ENCODE measurements at regions of chr10 and their contacts with region 1.

Region 1: GRCh38 chr10:71419750-71420149 is 23.0 kb downstream of the CDH23 start:
- DNase-seq: no peak
- H3K4me3 ChIP-seq: no peak overlapping the region
- H3K27ac ChIP-seq: no peak overlapping the region
- H3K4me1 ChIP-seq: no peaks in the 10 kb centered on the region
- H3K27me3 ChIP-seq: no peaks in the 10 kb centered on the region
- CTCF ChIP-seq: no peak

Region 2: DNA sequence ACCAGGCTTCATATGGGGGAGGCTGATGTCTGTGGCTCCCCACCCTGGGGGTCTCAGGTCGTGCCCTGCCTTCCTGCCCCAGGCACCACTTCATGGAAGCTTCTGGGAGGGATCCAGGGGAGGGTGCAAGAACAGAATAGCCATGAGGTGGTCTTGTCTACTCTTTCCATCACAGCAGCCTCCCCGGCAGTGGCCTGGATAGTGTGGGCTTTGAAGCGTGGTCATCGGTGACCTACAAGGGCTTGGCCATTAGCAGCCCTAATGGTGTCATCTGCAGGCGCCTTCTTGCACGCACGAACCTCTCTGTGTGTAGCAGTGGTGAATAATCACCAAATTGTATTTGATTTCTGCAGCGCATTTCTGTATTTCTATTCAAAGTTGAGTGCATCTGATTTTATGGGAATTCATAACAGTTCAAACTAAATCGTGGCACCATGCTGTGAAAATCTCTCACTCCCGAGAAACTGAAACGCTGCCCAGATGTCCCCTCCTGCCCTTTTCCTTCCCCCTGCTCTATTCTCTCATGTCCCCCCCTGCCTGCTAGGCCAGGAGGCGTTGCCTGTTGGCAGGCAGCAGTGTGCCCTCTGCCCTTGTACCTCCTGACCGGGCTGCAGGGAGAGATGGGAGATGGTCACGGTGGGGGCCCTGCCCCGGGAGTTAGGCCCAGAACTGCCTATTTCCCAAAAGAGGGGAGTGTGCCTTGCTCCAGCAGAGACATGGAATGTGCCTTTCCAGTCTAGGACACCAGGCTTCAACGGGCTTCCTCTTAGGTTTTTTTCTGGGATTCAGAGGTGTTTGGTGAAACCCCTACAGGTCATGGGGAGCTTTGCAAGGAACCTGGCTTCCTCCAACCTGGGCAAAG is 11.7 kb after region 1 on chr10:
- CTCF ChIA-PET with region 1: no interaction called
- POLR2A ChIA-PET with region 1: interaction called, 18 read pairs
- intact Hi-C with region 1: no loop called
- DNase-seq: no peak
- H3K4me3 ChIP-seq: no peak overlapping the region
- H3K27ac ChIP-seq: no peak overlapping the region
- H3K4me1 ChIP-seq: peaks cover 23% of the 10 kb centered on the region
- H3K27me3 ChIP-seq: no peaks in the 10 kb centered on the region
- CTCF ChIP-seq: peak; percentile 48

Measured in PC-9 (cell line).